Common myeloid progenitor, CD34-positive (primary cell): ENCODE measurements at regions of chr3 and their contacts with region 1.

Region 1: DNA sequence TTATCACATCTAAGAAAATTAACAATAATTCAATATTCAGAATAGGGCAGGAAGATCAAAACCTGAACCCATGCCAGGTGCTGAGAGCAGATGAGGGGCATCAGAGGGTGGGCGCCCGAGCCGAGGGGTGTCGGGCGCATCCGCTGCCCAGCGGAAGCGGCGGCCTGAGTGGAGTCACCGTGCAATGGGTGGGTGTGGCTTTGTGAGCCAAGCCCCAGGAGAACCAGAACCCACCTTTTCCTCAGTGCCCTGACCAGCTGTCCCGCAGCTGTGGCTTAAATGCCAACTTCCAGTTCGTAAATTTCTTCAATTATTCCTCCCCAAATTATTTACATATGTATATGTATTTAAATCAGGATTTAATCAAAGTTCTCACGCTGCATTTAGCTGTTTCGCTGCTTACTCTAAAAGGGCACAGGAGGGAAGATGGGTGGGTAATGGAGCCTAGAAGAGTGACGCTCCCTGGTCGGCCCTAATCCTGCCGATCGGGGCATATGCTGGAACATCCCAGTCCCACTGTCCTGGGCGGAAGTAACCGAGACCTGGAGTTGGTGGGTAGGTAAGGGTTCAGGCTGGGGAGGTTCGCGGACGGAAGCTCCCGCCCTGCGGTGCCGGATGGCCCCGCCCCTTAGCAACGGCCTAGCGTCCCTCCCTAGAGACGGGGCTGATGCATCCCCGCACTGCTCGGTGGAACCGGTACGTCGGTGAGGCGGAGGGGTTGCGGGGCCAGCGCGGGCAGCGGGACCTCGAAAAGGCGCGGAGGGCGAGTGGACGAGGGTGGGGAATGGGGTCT is 1.3 kb downstream of the DNAH1 start:
- DNase-seq: peak; percentile 29 to 65 (median 62)
- H3K4me3 ChIP-seq: peak overlapping the region in 4 of 7 experiments; percentile 39 to 73 (median 58)
- H3K27ac ChIP-seq: no peak overlapping the region
- H3K4me1 ChIP-seq: peaks cover 0 to 11% (median 7%) of the 10 kb centered on the region in 4 experiments
- H3K27me3 ChIP-seq: no peaks in the 10 kb centered on the region

Region 2: DNA sequence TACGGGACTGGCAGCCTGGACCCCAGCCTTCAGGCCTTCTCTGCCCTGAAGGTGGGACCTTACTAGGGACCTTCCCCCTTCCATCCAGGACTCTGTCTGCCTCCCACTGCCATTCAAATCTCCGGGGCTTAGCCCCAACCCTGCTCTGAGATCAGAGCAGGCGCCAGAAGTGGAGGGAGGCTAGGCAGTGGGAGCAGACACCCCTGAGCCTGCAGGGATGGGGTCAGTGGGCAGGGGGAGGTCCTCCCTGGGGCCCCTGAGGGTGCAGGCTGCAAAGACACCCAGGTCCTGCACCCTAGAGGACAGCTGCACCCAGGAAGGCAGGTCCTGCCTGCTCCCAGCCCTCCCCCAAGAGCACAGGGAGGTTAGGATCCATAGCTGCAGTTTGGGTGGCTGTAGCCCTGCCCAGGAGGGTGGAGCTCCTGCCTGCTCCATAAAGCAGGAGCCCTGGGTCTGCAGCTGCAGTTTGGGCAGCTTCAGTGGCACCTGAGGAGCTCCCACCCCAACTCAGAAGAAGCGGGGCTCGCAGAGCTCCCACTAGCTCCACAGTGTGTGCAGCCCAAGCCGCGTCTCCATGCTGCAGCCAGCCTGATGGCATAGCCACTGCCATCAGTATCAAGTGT is 155.0 kb before region 1 on chr3:
- CTCF ChIA-PET with region 1: no interaction called
- POLR2A ChIA-PET with region 1: no interaction called
- DNase-seq: no peak
- H3K4me3 ChIP-seq: no peak overlapping the region
- H3K27ac ChIP-seq: no peak overlapping the region
- H3K4me1 ChIP-seq: no peaks in the 10 kb centered on the region
- H3K27me3 ChIP-seq: no peaks in the 10 kb centered on the region

Region 3: GRCh38 chr3:52299879-52300611 is 17.4 kb before region 1 on chr3:
- CTCF ChIA-PET with region 1: interaction called, 471 read pairs
- POLR2A ChIA-PET with region 1: no interaction called
- DNase-seq: peak; percentile 84 to 95 (median 93)
- H3K4me3 ChIP-seq: peak overlapping the region in 4 of 7 experiments; percentile 12 to 52 (median 28)
- H3K27ac ChIP-seq: peak overlapping the region in 1 of 2 experiments; percentile 59
- H3K4me1 ChIP-seq: peaks cover 5 to 54% (median 47%) of the 10 kb centered on the region in 4 experiments
- H3K27me3 ChIP-seq: no peaks in the 10 kb centered on the region